ENCODE measurements at regions of chr16 and their contacts with region 1.

Region 1: GRCh38 chr16:10988164-10988803 is 43.9 kb downstream of the CLEC16A start:
- DNase-seq: peak; percentile 91
- ATAC-seq: peak; percentile 88
- H3K4me3 Mint-ChIP-seq: peak overlapping the region; percentile 46
- H3K27ac Mint-ChIP-seq: peak overlapping the region; percentile 92
- H3K4me1 Mint-ChIP-seq: peaks cover 89% of the 10 kb centered on the region
- H3K27me3 Mint-ChIP-seq: no peaks in the 10 kb centered on the region

Region 2: GRCh38 chr16:11025120-11025531 is 36.8 kb after region 1 on chr16:
- CTCF ChIA-PET with region 1: no interaction called
- POLR2A ChIA-PET with region 1: no interaction called
- intact Hi-C with region 1: loop called in 1 of 2 experiments (anchors 2 kb)
- DNase-seq: peak; percentile 20
- ATAC-seq: peak; percentile 89
- H3K4me3 Mint-ChIP-seq: no peak overlapping the region
- H3K27ac Mint-ChIP-seq: peak overlapping the region; percentile 81
- H3K4me1 Mint-ChIP-seq: peaks cover 20% of the 10 kb centered on the region
- H3K27me3 Mint-ChIP-seq: no peaks in the 10 kb centered on the region

Region 3: DNA sequence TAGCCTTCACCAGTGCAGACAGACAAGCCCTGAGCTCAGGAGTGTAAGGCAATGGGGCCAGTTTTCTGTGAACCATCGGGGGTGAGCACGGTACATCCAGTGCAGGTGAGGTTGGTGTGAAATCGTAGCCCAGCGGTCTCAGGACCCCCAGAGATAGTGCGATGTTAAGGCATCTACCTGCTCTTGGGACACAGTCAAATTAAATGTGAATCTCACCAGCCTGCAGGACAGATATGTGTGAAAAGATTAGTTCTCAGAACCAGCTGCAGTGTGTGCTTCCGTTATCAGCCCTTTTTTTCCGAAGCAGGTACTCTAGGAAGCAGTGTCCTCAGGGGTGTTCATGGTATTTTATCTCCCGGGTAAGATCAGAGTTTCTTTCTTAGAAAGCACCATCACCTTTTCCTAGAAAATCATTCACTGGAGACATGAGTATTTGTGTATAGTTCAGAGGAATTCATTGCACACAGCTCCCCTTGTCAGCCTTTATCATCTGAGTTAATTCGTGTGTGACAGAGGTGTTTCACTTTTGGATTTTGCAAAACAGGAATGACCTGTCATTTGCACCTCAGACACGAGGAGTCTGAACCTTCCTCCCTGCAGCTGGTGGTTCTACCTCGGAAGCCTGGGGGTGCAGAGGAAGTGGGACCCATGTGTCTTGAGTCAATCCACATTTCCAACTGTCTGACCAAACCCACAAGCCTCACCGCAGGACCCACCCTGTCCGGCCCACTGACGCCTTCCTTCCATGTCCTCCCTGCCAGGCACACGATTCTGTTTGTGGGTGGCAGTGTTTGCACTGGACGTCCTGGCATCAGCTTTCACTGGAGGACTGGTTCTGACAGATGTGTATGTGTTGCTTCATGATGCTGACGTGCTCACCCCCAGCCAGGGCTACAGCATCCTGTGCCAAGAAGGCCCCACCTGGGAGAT is 63.9 kb after region 1 on chr16:
- CTCF ChIA-PET with region 1: interaction called, 3 read pairs
- POLR2A ChIA-PET with region 1: interaction called, 3 read pairs
- intact Hi-C with region 1: loop called (anchors 1 kb)
- DNase-seq: peak; percentile 85
- ATAC-seq: peak; percentile 89
- H3K4me3 Mint-ChIP-seq: peak overlapping the region; percentile 7
- H3K27ac Mint-ChIP-seq: peak overlapping the region; percentile 75
- H3K4me1 Mint-ChIP-seq: peaks cover 61% of the 10 kb centered on the region
- H3K27me3 Mint-ChIP-seq: no peaks in the 10 kb centered on the region

Region 4: DNA sequence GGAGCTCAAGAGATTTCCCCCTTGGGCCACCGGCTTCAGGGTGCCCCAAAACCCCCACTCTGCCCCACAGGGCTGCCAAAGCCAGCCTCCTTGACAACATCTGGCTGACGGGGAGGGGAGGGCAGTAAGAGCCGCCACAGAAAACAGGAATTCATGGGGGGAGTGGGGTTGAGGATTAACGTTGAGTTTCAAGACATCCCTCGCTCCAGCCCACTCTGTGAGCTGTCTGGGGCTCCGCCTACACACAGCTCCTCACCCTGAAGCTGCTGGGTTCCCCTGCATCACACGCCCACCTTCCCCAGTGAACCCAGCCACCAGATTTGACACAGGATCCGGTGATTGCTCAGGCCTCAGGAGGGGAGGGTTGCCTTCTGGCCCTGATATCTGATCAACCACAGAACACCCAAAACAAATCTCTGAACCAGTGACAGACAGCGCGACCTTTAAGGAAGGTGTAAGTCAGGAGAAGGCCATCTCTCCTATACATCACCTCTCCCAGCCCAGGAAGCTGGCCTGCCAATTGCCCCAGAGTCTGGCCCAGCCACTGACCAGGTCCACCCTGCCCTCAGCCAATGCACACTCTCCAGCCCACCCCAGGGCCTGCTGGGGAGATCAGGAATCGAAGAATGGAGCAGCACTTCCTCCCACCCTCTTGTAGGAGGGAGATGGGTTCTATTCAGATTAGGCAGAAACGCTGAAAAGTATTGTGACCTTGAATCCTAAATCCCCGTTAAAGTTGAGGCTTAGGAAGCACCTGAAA is 88.2 kb after region 1 on chr16:
- CTCF ChIA-PET with region 1: no interaction called
- POLR2A ChIA-PET with region 1: no interaction called
- intact Hi-C with region 1: loop called in 1 of 2 experiments (anchors 2 kb)
- DNase-seq: peak; percentile 87
- ATAC-seq: peak; percentile 69
- H3K4me3 Mint-ChIP-seq: peak overlapping the region; percentile 15
- H3K27ac Mint-ChIP-seq: peak overlapping the region; percentile 89
- H3K4me1 Mint-ChIP-seq: peaks cover 96% of the 10 kb centered on the region
- H3K27me3 Mint-ChIP-seq: no peaks in the 10 kb centered on the region

Region 5: DNA sequence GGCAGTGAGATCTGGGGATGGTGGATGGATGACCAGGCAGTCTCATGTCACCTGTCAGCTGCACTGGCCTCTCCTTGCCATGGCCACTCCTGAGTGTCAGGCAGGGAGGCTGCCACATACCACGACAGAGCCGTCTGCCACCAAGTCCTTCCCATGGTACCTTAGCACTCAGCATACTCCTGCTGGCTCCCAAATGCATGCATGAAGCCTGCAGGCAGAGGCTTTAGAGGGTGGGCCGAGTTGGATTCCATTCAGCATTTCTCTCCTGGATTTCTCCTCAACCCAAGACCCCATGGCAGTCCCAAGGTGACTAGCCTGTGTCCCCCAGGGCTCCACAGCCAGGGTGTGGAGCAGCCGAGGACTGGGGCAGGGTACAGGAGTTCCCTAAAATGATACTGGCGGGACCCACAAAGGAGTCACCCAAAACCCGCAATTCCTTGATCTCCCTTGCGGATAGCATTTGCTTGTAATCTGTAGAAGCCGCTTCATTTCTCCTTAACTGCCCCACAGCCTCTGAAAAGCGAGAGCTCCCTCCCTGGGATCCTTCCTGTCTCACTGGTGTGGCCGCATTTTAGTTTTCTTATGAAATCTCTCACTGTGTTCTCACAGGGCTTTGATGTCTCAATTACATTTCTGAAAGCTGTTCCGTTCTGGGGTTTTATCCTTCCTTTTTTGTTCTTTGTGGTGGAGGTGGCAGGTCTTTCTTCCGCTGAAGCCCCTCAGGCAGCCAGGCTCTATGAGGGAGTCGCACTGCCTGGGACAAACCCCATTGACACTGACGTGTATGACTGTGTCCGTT is 126.3 kb after region 1 on chr16:
- CTCF ChIA-PET with region 1: interaction called, 3 read pairs
- POLR2A ChIA-PET with region 1: interaction called, 3 read pairs
- intact Hi-C with region 1: loop called in 1 of 2 experiments (anchors 1 kb)
- DNase-seq: peak; percentile 59
- ATAC-seq: peak; percentile 80
- H3K4me3 Mint-ChIP-seq: peak overlapping the region; percentile 44
- H3K27ac Mint-ChIP-seq: peak overlapping the region; percentile 85
- H3K4me1 Mint-ChIP-seq: peaks cover 57% of the 10 kb centered on the region
- H3K27me3 Mint-ChIP-seq: no peaks in the 10 kb centered on the region

Region 6: DNA sequence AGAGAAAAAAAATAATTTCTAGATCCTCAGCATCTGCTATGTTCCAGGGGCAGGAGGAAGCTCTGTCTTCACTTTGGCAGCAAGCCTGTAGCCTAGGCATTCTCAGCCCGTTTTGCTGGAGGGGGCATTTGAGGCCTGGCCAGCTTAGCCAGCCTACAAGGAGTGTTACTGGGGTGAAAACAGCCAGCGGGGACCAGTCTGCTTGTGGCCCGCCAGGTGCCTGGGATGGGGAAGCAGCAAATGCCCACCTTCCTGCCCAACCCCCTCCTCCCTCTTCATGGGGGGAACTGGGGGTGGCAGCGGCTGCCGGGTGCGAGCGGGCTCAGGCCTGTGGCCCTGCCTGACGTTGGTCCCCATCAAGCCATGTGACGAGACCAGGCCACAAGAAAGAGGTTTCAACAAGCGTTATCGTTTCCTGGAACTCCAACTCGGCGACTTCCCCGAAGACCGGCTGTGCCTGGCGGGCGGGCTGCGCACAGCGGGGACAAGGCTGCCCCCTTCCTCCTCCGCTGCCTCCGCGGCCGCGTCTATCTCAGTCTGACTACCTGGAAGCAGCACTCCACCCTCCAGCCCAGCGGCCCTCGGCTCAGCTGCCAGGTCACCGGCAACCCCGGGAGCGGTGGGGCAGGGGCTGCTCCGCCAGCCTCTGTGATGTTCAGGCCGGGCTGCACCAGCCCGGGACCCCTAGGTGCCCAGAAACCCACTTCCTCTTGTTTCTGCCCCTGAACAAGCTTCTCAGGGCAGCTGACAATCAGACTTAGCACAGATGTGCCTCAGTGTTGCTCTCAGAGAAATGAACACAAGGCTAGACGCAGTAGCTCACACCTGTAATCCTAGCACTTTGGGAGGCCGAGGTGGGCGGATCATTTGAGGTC is 244.8 kb after region 1 on chr16:
- CTCF ChIA-PET with region 1: interaction called, 3 read pairs
- POLR2A ChIA-PET with region 1: interaction called, 4 read pairs
- intact Hi-C with region 1: loop called (anchors 1 to 2 kb)
- DNase-seq: peak; percentile 96
- ATAC-seq: peak; percentile 82
- H3K4me3 Mint-ChIP-seq: peak overlapping the region; percentile 60
- H3K27ac Mint-ChIP-seq: peak overlapping the region; percentile 97
- H3K4me1 Mint-ChIP-seq: peaks cover 80% of the 10 kb centered on the region
- H3K27me3 Mint-ChIP-seq: no peaks in the 10 kb centered on the region

Measured in activated CD4-positive, alpha-beta T cell treated with anti-CD3 and anti-CD28 coated beads for 36 hours (primary cell).